A673 (cell line): ENCODE measurements at regions of chr20 and their contacts with region 1.

Region 1: DNA sequence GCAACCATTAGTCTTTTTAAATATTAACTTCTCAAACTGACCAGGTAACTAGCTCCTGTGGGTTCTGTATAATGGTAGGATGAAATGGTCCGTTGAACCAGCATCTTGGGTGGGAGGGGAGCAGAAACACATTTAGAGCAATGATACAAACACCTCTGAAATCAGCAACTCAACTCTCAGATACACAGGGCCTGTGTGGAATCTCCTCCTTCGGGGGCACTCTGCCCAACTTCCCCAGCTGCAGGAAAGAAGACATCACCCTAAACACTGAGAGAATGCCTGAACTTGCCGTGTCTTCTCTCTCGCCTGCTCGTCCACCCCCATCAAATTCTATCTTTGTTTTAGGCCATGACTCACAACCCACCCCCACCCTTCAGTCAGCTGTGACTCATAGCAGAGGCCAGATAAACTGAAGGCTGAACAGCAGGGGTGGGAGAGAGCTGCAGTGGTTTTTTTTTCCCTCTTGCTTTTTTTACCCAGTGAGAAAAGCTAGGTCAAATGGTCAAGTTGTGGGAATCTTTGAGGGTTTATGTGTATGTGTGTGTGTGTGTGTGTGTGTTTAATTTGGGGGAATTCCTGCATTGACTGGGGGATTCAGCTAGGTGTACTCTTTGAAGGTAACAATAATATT is 593.4 kb upstream of the JAG1 start:
- DNase-seq: peak; percentile 90
- H3K4me3 ChIP-seq: no peak overlapping the region
- H3K27ac ChIP-seq: no peak overlapping the region
- H3K4me1 ChIP-seq: peaks cover 20% of the 10 kb centered on the region
- H3K27me3 ChIP-seq: no peaks in the 10 kb centered on the region
- CTCF ChIP-seq: no peak

Region 2: DNA sequence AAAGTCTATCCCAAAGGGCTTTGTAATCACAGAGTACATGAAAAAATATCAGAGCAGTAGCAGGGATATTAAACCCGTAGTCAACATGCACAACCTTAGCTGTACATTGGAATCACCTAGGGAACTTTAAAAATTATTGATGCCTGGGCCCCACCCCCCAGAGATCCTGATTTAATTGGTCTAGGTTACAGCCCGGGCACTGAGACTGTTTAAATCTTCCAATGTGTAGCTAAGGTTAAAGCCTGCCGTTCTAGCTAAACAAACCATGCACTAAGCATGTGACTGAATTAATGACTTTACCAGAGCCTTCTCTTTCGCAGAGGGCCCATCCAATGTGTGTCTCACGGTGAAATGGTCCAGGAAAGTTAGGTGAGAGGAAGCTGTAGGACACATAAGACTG is 579.4 kb before region 1 on chr20:
- CTCF ChIA-PET with region 1: no interaction called
- POLR2A ChIA-PET with region 1: interaction called, 10 read pairs
- intact Hi-C with region 1: no loop called
- DNase-seq: no peak
- H3K4me3 ChIP-seq: no peak overlapping the region
- H3K27ac ChIP-seq: no peak overlapping the region
- H3K4me1 ChIP-seq: no peaks in the 10 kb centered on the region
- H3K27me3 ChIP-seq: no peaks in the 10 kb centered on the region
- CTCF ChIP-seq: no peak

Region 3: GRCh38 chr20:11350126-11351005 is 83.1 kb after region 1 on chr20:
- CTCF ChIA-PET with region 1: no interaction called
- POLR2A ChIA-PET with region 1: no interaction called
- intact Hi-C with region 1: no loop called
- DNase-seq: peak; percentile 41
- H3K4me3 ChIP-seq: no peak overlapping the region
- H3K27ac ChIP-seq: no peak overlapping the region
- H3K4me1 ChIP-seq: no peaks in the 10 kb centered on the region
- H3K27me3 ChIP-seq: no peaks in the 10 kb centered on the region
- CTCF ChIP-seq: no peak